CD8-positive, alpha-beta T cell (primary cell): ENCODE measurements at regions of chr9 and their contacts with region 1.

Region 1: GRCh38 chr9:75148561-75148960 is 60.2 kb downstream of the OSTF1 start:
- DNase-seq: peak in 2 of 9 experiments; percentile 16 to 34
- ATAC-seq: no peak
- H3K4me3 ChIP-seq: no peak overlapping the region
- H3K4me3 Mint-ChIP-seq: peak overlapping the region; percentile 55
- H3K27ac ChIP-seq: peak overlapping the region; percentile 12 to 70
- H3K27ac Mint-ChIP-seq: peak overlapping the region; percentile 88
- H3K4me1 ChIP-seq: peaks cover 78% of the 10 kb centered on the region
- H3K4me1 Mint-ChIP-seq: peaks cover 84% of the 10 kb centered on the region
- H3K27me3 ChIP-seq: no peaks in the 10 kb centered on the region
- H3K27me3 Mint-ChIP-seq: no peaks in the 10 kb centered on the region
- CTCF ChIP-seq: no peak

Region 2: GRCh38 chr9:74952281-74953151 is 196.0 kb before region 1 on chr9 and contains the start of gene C9orf40:
- CTCF ChIA-PET with region 1: no interaction called
- POLR2A ChIA-PET with region 1: interaction called, 3 read pairs
- intact Hi-C with region 1: loop called in 1 of 2 experiments (anchors 10 kb)
- DNase-seq: peak; percentile 81 to 93 (median 92)
- ATAC-seq: peak; percentile 88
- H3K4me3 ChIP-seq: peak within 1 kb of the TSS; percentile 86 to 99
- H3K4me3 Mint-ChIP-seq: peak within 1 kb of the TSS; percentile 98
- H3K27ac ChIP-seq: peak within 1 kb of the TSS; percentile 87 to 95
- H3K27ac Mint-ChIP-seq: peak within 1 kb of the TSS; percentile 94
- H3K4me1 ChIP-seq: no peaks in the 10 kb centered on the region
- H3K4me1 Mint-ChIP-seq: peaks cover 20% of the 10 kb centered on the region
- H3K27me3 ChIP-seq: no peaks in the 10 kb centered on the region
- H3K27me3 Mint-ChIP-seq: no peaks in the 10 kb centered on the region
- CTCF ChIP-seq: peak; percentile 77
- total RNA-seq, gene C9orf40: 1.5 to 2.3 TPM

Region 3: GRCh38 chr9:75108555-75108954 is 40.0 kb before region 1 on chr9:
- CTCF ChIA-PET with region 1: interaction called, 3 read pairs
- POLR2A ChIA-PET with region 1: no interaction called
- intact Hi-C with region 1: loop called in 1 of 2 experiments (anchors 5 kb)
- DNase-seq: peak in 2 of 9 experiments; percentile 45 to 53
- ATAC-seq: no peak
- H3K4me3 ChIP-seq: no peak overlapping the region
- H3K4me3 Mint-ChIP-seq: no peak overlapping the region
- H3K27ac ChIP-seq: no peak overlapping the region
- H3K27ac Mint-ChIP-seq: peak overlapping the region; percentile 68
- H3K4me1 ChIP-seq: peaks cover 36% of the 10 kb centered on the region
- H3K4me1 Mint-ChIP-seq: peaks cover 72% of the 10 kb centered on the region
- H3K27me3 ChIP-seq: no peaks in the 10 kb centered on the region
- H3K27me3 Mint-ChIP-seq: no peaks in the 10 kb centered on the region
- CTCF ChIP-seq: no peak

Region 4: GRCh38 chr9:75170898-75171360 is 22.4 kb after region 1 on chr9:
- CTCF ChIA-PET with region 1: no interaction called
- POLR2A ChIA-PET with region 1: interaction called, 3 read pairs
- intact Hi-C with region 1: loop called in 1 of 2 experiments (anchors 2 kb)
- DNase-seq: no peak
- ATAC-seq: no peak
- H3K4me3 ChIP-seq: no peak overlapping the region
- H3K4me3 Mint-ChIP-seq: no peak overlapping the region
- H3K27ac ChIP-seq: no peak overlapping the region
- H3K27ac Mint-ChIP-seq: no peak overlapping the region
- H3K4me1 ChIP-seq: no peaks in the 10 kb centered on the region
- H3K4me1 Mint-ChIP-seq: peaks cover 18% of the 10 kb centered on the region
- H3K27me3 ChIP-seq: no peaks in the 10 kb centered on the region
- H3K27me3 Mint-ChIP-seq: no peaks in the 10 kb centered on the region
- CTCF ChIP-seq: no peak